ENCODE measurements at regions of chr16 and their contacts with region 1.

Region 1: DNA sequence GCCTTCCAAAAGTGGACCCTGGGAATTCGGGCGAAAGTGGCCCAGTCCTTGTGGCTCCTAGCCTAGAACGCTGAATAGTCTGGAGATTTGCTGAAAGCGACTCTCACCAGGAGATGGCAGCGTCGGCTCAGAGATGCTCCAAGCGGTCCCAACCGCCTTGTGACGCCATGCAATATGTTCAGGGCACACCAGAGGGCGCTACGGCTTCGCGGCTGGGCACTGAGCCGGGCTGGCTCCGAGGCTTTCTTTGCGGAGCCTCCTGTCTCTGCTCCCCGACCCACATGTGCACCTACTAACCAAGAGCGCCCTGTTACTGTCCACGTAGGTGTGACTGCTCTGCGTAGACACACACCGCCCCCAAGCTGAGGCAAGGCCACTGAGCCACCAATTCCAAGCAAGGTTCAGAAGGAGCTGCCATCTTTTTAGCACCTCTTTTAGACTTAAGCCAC is 36.9 kb downstream of the SYCE1L start:
- DNase-seq: peak; percentile 83 to 90 (median 88)
- ATAC-seq: peak; percentile 97
- H3K4me3 ChIP-seq: no peak overlapping the region
- H3K27ac ChIP-seq: no peak overlapping the region
- H3K4me1 ChIP-seq: no peaks in the 10 kb centered on the region
- H3K27me3 ChIP-seq: peaks cover 3 to 8% of the 10 kb centered on the region in 2 experiments; a peak in 3 of 5 replicates
- CTCF ChIP-seq: peak; percentile 99 to 100 (median 99)
- EP300 ChIP-seq: peak; percentile 11; the same call in 1 of the 2 replicates
- POLR2A ChIP-seq: no peak
- RAD21 ChIP-seq: peak; percentile 99 to 100

Region 2: DNA sequence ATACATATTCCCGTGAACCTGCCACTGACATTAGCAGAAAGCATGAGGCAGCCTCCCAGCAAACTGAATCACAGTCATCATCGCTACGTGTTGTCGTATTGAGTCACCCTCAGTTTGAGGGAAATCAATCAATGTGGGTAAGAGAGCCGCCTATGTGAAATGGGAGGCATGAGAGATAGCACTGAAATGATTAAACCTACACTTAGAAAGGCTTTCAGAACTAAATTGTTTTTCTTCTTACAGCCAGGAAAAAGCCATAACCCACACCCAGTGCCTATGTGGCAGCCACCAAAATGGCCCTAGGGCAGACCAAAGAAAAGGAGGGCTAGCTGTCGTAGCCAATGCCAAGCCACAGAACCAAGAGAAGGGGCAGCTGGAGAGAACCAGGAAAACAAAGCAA is 108.3 kb after region 1 on chr16:
- CTCF ChIA-PET with region 1: no interaction called
- POLR2A ChIA-PET with region 1: no interaction called
- in situ Hi-C with region 1: no loop called
- intact Hi-C with region 1: no loop called
- DNase-seq: no peak
- ATAC-seq: no peak
- H3K4me3 ChIP-seq: no peak overlapping the region
- H3K27ac ChIP-seq: no peak overlapping the region
- H3K4me1 ChIP-seq: no peaks in the 10 kb centered on the region
- H3K27me3 ChIP-seq: no peaks in the 10 kb centered on the region
- CTCF ChIP-seq: no peak
- EP300 ChIP-seq: no peak
- POLR2A ChIP-seq: no peak
- RAD21 ChIP-seq: no peak

Region 3: DNA sequence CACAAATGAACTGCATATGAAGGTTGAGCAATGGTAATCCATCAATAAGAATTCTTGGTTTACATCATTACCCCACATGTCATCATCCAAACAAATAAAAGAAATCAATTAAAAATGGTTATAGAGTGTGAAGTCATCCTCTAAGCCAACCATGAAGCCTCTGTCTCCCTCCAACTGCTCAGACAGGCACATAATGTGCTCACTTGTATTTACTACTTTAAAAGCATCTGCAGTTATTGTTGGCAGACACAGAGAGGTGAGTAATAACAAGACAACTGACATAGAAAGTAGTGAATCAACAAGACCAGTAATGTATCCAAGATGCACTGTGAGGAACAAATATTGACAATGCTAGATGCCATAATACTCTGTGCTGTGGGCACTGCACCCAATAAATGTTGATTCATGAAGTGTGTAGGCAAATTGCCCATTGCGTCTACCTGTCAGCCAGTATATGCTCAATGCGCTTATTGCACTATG is 178.7 kb after region 1 on chr16:
- CTCF ChIA-PET with region 1: interaction called, 4 read pairs
- POLR2A ChIA-PET with region 1: no interaction called
- in situ Hi-C with region 1: no loop called
- intact Hi-C with region 1: loop called (anchors 10 kb)
- DNase-seq: no peak
- ATAC-seq: no peak
- H3K4me3 ChIP-seq: no peak overlapping the region
- H3K27ac ChIP-seq: no peak overlapping the region
- H3K4me1 ChIP-seq: no peaks in the 10 kb centered on the region
- H3K27me3 ChIP-seq: no peaks in the 10 kb centered on the region
- CTCF ChIP-seq: no peak
- EP300 ChIP-seq: no peak
- POLR2A ChIP-seq: no peak
- RAD21 ChIP-seq: no peak

Region 4: DNA sequence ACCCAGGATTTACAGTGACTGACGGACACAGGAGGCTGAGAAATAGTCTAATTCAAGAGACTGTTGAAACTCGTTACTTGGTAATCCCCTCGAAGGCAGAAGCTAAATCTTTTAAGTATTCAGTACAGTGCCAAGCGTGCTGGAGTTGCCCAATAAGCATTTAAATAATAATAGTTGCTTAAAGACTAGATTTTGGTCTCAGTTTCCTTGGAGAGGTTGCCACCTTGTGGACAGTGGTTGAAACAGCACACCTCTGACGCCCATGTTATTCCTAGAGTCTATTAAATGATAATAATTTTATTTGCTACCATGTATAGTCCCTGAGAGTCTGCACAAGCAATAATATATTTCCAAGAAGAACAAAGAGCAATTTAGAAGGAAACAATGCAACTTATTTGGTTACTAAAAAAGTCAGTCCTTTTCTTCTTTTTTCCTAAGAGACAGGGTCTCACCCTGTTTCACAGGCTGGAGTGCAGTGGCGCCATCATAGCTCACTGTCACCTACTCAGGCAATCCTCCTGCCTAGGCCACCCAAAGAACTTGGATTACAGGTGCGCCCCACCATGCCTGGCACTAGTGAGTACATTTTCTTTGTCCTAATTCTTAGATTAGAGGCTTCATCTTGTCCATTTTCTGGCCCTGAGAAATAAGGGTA is 348.2 kb after region 1 on chr16:
- CTCF ChIA-PET with region 1: interaction called, 92 read pairs
- POLR2A ChIA-PET with region 1: interaction called, 3 read pairs
- in situ Hi-C with region 1: loop called (anchors 5 kb)
- intact Hi-C with region 1: loop called (anchors 1 kb)
- DNase-seq: peak; percentile 41 to 59 (median 56)
- ATAC-seq: peak; percentile 74
- H3K4me3 ChIP-seq: no peak overlapping the region
- H3K27ac ChIP-seq: no peak overlapping the region
- H3K4me1 ChIP-seq: no peaks in the 10 kb centered on the region
- H3K27me3 ChIP-seq: peaks cover 2 to 6% of the 10 kb centered on the region in 2 experiments; a peak in 1 of 5 replicates
- CTCF ChIP-seq: peak; percentile 67 to 90 (median 85)
- EP300 ChIP-seq: no peak
- POLR2A ChIP-seq: no peak
- RAD21 ChIP-seq: peak; percentile 79 to 89

Region 5: GRCh38 chr16:77660311-77660710 is 424.2 kb after region 1 on chr16:
- CTCF ChIA-PET with region 1: interaction called, 9 read pairs
- POLR2A ChIA-PET with region 1: no interaction called
- in situ Hi-C with region 1: no loop called
- intact Hi-C with region 1: loop called (anchors 5 kb)
- DNase-seq: peak; percentile 9 to 18 (median 14)
- ATAC-seq: 0 out of 3 replicates have a peak, but pooled peaks have one; percentile 47
- H3K4me3 ChIP-seq: no peak overlapping the region
- H3K27ac ChIP-seq: no peak overlapping the region
- H3K4me1 ChIP-seq: no peaks in the 10 kb centered on the region; a peak in 1 of 5 replicates
- H3K27me3 ChIP-seq: no peaks in the 10 kb centered on the region; a peak in 2 of 5 replicates
- CTCF ChIP-seq: peak; percentile 37 to 51 (median 39); a peak in 4 of 6 replicates
- EP300 ChIP-seq: no peak
- POLR2A ChIP-seq: no peak
- RAD21 ChIP-seq: peak; percentile 27 to 38; a peak in 3 of 4 replicates

Region 6: GRCh38 chr16:77971306-77972271 is 735.5 kb after region 1 on chr16:
- CTCF ChIA-PET with region 1: interaction called, 11 read pairs
- POLR2A ChIA-PET with region 1: no interaction called
- in situ Hi-C with region 1: loop called (anchors 25 kb)
- intact Hi-C with region 1: loop called (anchors 5 kb)
- DNase-seq: peak; percentile 72 to 81 (median 80)
- ATAC-seq: peak; percentile 96
- H3K4me3 ChIP-seq: no peak overlapping the region
- H3K27ac ChIP-seq: no peak overlapping the region
- H3K4me1 ChIP-seq: no peaks in the 10 kb centered on the region
- H3K27me3 ChIP-seq: peaks cover 0 to 2% of the 10 kb centered on the region in 2 experiments; a peak in 3 of 5 replicates
- CTCF ChIP-seq: peak; percentile 75 to 86 (median 82)
- EP300 ChIP-seq: no peak
- POLR2A ChIP-seq: no peak
- RAD21 ChIP-seq: peak; percentile 76 to 86

Region 7: GRCh38 chr16:78002915-78003538 is 766.9 kb after region 1 on chr16:
- CTCF ChIA-PET with region 1: no interaction called
- POLR2A ChIA-PET with region 1: interaction called, 3 read pairs
- in situ Hi-C with region 1: no loop called
- intact Hi-C with region 1: loop called (anchors 10 kb)
- DNase-seq: peak; percentile 83 to 86 (median 84)
- ATAC-seq: peak; percentile 99
- H3K4me3 ChIP-seq: no peak overlapping the region
- H3K27ac ChIP-seq: no peak overlapping the region
- H3K4me1 ChIP-seq: no peaks in the 10 kb centered on the region
- H3K27me3 ChIP-seq: peaks cover 2 to 10% of the 10 kb centered on the region in 2 experiments; a peak in 2 of 5 replicates
- CTCF ChIP-seq: peak; percentile 85 to 95 (median 94)
- EP300 ChIP-seq: no peak
- POLR2A ChIP-seq: no peak
- RAD21 ChIP-seq: peak; percentile 33 to 69